MCF 10A (cell line): ENCODE measurements at regions of chr1 and their contacts with region 1.

Region 1: DNA sequence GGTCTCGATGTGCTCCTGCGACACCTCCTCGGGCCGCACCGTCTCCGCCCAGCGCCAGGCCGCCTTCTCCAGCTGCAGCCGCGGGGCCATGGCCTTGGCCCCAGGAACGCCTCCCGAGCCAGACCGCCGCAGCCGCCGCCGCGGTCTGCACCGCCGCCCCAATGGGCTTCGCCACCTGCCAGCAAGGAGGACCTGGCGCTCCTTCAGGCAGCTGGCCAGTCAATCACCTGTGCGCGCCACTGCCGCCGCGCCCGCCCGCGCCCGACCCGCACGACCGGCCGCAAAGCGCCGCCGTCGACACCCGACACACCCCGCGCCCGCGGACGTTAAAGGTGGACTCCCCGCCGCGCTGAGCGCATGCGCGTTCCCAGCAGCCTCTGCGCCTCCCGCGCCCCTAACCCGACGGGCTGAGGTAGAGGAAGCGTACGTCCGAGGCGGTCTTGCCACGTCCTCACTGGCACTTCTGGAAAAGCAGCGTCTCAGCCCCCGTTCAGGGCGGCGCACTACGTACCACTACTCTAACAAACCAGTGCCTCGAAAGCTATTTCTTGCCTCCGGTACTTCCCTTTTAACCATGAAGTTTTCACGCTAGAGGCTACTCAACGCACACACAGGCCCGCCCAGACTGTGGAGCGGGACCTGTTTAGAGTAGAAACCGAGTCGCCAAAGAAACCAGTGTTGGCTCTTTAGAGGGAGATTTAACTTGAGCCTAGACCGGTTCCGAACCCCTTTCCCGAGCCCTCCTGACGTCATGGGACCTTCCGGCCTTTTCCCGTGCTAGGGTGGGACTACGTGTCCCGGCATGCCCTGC is at the start of gene USP48:
- DNase-seq: peak; percentile 97
- H3K4me3 Mint-ChIP-seq: peak within 1 kb of the TSS; percentile 87
- H3K27ac Mint-ChIP-seq: peak within 1 kb of the TSS; percentile 99
- H3K4me1 Mint-ChIP-seq: peaks cover 16% of the 10 kb centered on the region
- H3K27me3 Mint-ChIP-seq: no peaks in the 10 kb centered on the region
- CTCF ChIP-seq: no peak
- total RNA-seq, gene USP48: 60.2 and 64.8 TPM in 2 replicates

Region 2: GRCh38 chr1:21734526-21734925 is 48.5 kb before region 1 on chr1:
- CTCF ChIA-PET with region 1: interaction called, 3 read pairs
- POLR2A ChIA-PET with region 1: interaction called, 11 read pairs
- intact Hi-C with region 1: no loop called
- DNase-seq: peak; percentile 21
- H3K4me3 Mint-ChIP-seq: no peak overlapping the region
- H3K27ac Mint-ChIP-seq: no peak overlapping the region
- H3K4me1 Mint-ChIP-seq: no peaks in the 10 kb centered on the region
- H3K27me3 Mint-ChIP-seq: no peaks in the 10 kb centered on the region
- CTCF ChIP-seq: no peak

Region 3: GRCh38 chr1:21770201-21770600 is 12.9 kb before region 1 on chr1:
- CTCF ChIA-PET with region 1: interaction called, 5 read pairs
- POLR2A ChIA-PET with region 1: interaction called, 63 read pairs
- intact Hi-C with region 1: no loop called
- DNase-seq: no peak
- H3K4me3 Mint-ChIP-seq: no peak overlapping the region
- H3K27ac Mint-ChIP-seq: no peak overlapping the region
- H3K4me1 Mint-ChIP-seq: peaks cover 27% of the 10 kb centered on the region
- H3K27me3 Mint-ChIP-seq: no peaks in the 10 kb centered on the region
- CTCF ChIP-seq: no peak

Region 4: GRCh38 chr1:21937372-21938221 is 154.5 kb after region 1 on chr1:
- CTCF ChIA-PET with region 1: no interaction called
- POLR2A ChIA-PET with region 1: interaction called, 27 read pairs
- intact Hi-C with region 1: loop called (anchors 5 kb)
- DNase-seq: peak; percentile 81
- H3K4me3 Mint-ChIP-seq: peak overlapping the region; percentile 71
- H3K27ac Mint-ChIP-seq: peak overlapping the region; percentile 6
- H3K4me1 Mint-ChIP-seq: peaks cover 54% of the 10 kb centered on the region
- H3K27me3 Mint-ChIP-seq: no peaks in the 10 kb centered on the region
- CTCF ChIP-seq: no peak

Region 5: GRCh38 chr1:21963477-21964217 is 180.6 kb after region 1 on chr1:
- CTCF ChIA-PET with region 1: no interaction called
- POLR2A ChIA-PET with region 1: interaction called, 3 read pairs
- intact Hi-C with region 1: loop called (anchors 2 kb)
- DNase-seq: peak; percentile 88
- H3K4me3 Mint-ChIP-seq: no peak overlapping the region
- H3K27ac Mint-ChIP-seq: peak overlapping the region; percentile 4
- H3K4me1 Mint-ChIP-seq: peaks cover 7% of the 10 kb centered on the region
- H3K27me3 Mint-ChIP-seq: no peaks in the 10 kb centered on the region
- CTCF ChIP-seq: peak; percentile 91

Region 6: DNA sequence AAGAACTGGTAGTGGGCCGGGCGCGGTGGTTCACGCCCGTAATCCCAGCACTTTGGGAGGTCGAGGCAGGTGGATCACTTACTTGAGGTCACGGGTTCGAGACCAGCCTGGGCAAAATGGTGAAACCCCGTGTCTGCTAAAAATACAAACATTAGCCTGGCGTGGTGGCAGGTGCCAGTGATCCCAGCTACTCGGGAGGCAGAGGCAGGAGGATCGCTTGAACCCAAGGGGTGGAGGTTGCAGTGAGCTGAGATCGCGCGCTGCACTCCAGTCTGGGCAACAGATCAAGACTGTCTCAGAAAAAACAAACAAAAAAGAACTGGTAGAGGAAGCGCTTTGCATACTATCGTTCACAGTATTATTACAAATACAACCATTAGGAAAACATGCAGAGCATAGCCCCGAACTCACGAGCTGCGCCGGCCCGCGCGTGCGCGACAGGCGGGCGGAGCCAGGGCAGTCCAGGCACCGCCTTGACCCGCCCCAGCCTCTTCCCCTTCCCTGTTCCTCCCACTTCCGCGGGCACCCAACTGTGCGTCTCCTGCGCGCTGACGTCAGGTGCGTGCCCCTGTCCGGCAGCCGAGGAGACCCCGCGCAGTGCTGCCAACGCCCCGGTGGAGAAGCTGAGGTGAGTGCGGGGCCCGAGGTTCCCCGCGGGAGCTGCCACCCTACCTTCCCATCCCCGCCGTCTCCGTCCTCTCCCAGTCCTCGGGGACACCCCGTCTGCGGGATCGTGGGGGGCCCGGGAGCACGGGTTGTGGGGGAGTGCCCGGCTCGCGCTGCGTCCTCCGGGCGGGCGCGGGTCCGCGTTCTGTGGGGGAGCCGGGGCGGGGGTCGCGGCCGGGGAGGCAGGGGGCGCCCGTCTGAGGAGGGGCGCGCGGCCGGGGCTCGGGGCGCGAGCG is 269.3 kb after region 1 on chr1 and contains the start of gene CDC42:
- CTCF ChIA-PET with region 1: no interaction called
- POLR2A ChIA-PET with region 1: interaction called, 30 read pairs
- intact Hi-C with region 1: no loop called
- DNase-seq: peak; percentile 96
- H3K4me3 Mint-ChIP-seq: peak within 1 kb of the TSS; percentile 89
- H3K27ac Mint-ChIP-seq: peak within 1 kb of the TSS; percentile 93
- H3K4me1 Mint-ChIP-seq: peaks cover 15% of the 10 kb centered on the region
- H3K27me3 Mint-ChIP-seq: no peaks in the 10 kb centered on the region
- CTCF ChIP-seq: no peak
- total RNA-seq, gene CDC42: 133 and 141 TPM in 2 replicates